ENCODE measurements at regions of chr10 and their contacts with region 1.

Region 1: DNA sequence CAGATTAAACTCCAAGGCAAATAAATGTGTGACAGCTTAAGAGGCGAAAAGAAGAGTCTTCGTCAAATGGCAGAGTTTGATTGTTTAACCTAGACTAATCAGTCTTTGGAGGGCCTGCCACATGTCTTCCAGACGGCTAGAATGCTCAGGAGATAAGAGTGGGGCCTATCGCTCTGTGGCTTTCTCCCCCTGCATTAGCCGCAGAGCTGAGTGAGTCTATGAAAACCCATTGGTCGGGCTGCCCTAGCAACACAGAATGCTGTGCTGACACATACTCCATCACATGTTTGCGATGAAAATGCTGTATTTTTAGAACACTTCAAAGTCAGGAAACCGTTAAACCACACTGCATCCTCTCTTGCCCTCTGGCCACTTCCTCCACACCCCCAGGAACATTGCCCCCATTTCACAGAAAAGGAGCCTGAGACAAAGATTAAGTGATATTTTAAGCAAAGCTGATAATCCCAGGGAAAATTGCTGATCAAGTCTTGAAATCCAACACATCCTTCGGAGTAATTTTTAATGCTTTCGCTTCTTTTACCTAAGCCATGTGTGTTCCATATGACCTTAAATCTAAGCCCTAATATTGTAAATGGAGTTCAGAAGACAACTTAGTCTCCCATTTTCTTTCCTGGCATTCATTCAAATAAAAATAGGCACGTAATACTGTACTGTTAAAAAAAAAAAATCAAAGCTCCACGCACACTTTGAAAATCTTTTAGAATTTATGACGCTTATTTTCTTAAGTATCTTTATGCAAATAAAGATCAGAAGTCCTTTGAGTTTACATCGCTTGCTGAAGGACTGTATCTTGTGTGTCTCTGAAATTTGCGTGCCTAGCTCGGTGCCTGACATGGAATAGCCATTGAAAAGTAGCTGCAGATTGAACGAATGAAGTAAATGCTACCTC is 161.2 kb downstream of the CELF2 start:
- DNase-seq: peak; percentile 78
- ATAC-seq: peak; percentile 70
- H3K4me3 Mint-ChIP-seq: no peak overlapping the region
- H3K27ac Mint-ChIP-seq: no peak overlapping the region
- H3K4me1 Mint-ChIP-seq: peaks cover 95% of the 10 kb centered on the region
- H3K27me3 Mint-ChIP-seq: no peaks in the 10 kb centered on the region

Region 2: GRCh38 chr10:10911471-10911921 is 267.4 kb before region 1 on chr10:
- POLR2A ChIA-PET with region 1: no interaction called
- DNase-seq: no peak
- ATAC-seq: no peak
- H3K4me3 Mint-ChIP-seq: no peak overlapping the region
- H3K27ac Mint-ChIP-seq: no peak overlapping the region
- H3K4me1 Mint-ChIP-seq: no peaks in the 10 kb centered on the region
- H3K27me3 Mint-ChIP-seq: peaks cover 20% of the 10 kb centered on the region

Region 3: GRCh38 chr10:11189582-11190376 is 10.9 kb after region 1 on chr10:
- POLR2A ChIA-PET with region 1: interaction called, 13 read pairs
- DNase-seq: no peak
- ATAC-seq: no peak
- H3K4me3 Mint-ChIP-seq: peak overlapping the region; percentile 48
- H3K27ac Mint-ChIP-seq: peak overlapping the region; percentile 37
- H3K4me1 Mint-ChIP-seq: peaks cover 76% of the 10 kb centered on the region
- H3K27me3 Mint-ChIP-seq: no peaks in the 10 kb centered on the region

Region 4: GRCh38 chr10:11209830-11210181 is 30.9 kb after region 1 on chr10:
- POLR2A ChIA-PET with region 1: interaction called, 32 read pairs
- DNase-seq: no peak
- ATAC-seq: peak; percentile 6
- H3K4me3 Mint-ChIP-seq: peak overlapping the region; percentile 90
- H3K27ac Mint-ChIP-seq: peak overlapping the region; percentile 91
- H3K4me1 Mint-ChIP-seq: peaks cover 82% of the 10 kb centered on the region
- H3K27me3 Mint-ChIP-seq: no peaks in the 10 kb centered on the region

Region 5: DNA sequence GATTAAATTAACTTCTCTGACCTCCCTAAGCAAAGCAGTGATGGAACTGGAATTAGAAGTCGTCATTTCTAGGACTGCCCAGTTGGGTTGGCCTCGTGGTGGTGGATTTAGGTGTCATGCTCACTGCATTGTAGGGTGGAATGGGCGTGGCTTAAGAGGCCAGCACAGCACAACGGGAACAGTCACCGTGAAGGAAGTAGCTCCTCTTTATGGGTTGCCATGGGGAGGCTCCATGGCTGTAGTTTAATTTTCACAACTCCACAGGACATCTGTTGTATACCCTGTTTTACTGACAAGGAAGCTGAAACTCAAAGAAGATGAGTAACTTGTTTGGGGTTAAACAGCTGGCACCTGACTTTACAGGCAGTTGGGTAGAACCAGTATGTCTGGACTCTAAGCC is 47.1 kb after region 1 on chr10:
- POLR2A ChIA-PET with region 1: interaction called, 22 read pairs
- DNase-seq: no peak
- ATAC-seq: peak; percentile 70
- H3K4me3 Mint-ChIP-seq: peak overlapping the region; percentile 66
- H3K27ac Mint-ChIP-seq: peak overlapping the region; percentile 84
- H3K4me1 Mint-ChIP-seq: peaks cover 75% of the 10 kb centered on the region
- H3K27me3 Mint-ChIP-seq: no peaks in the 10 kb centered on the region

Region 6: DNA sequence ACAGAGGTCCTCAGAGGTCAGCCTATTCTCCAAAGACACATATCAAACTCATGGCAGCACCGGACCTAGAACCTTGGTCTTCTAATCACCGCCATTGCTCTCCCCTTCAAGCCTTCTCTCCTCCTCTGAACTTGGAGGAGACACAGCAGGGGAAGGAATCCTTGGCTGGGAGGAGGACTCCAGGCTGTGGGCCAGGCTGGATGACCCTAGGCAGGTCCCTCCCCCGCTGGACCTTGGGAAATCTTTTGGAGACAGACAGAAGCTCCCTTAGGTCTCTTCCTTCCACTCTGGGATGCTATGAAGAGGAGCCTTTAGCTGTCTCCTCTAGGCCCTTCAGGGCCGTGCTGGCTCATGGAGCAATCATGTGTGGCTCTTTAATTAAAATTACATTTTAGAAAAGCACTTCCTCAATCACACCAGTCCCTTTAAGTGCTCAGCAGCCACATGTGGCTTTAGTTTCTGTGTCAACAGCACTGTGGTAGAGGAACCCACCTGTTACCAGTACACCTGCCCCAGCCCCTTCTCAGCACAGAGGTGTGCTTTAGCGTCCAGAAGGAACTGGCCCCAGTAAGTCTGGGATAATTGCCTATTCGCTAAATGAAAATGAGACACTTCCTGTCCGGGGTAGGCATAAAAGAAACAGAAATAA is 77.1 kb after region 1 on chr10:
- POLR2A ChIA-PET with region 1: no interaction called
- DNase-seq: no peak
- ATAC-seq: peak; percentile 11
- H3K4me3 Mint-ChIP-seq: no peak overlapping the region
- H3K27ac Mint-ChIP-seq: no peak overlapping the region
- H3K4me1 Mint-ChIP-seq: peaks cover 32% of the 10 kb centered on the region
- H3K27me3 Mint-ChIP-seq: no peaks in the 10 kb centered on the region

Measured in activated naive CD8-positive, alpha-beta T cell treated with anti-CD3 and anti-CD28 coated beads, Interleukin-2, amount 10 ng/mL, durations not matched to agents 7 days and 5 days (primary cell).